Endothelial cell of umbilical vein (primary cell): ENCODE measurements at regions of chr1 and their contacts with region 1.

Region 1: GRCh38 chr1:220556641-220557040 is 28.7 kb downstream of the MARK1 start:
- DNase-seq: peak; percentile 7
- H3K4me3 ChIP-seq: no peak overlapping the region
- H3K27ac ChIP-seq: no peak overlapping the region
- H3K4me1 ChIP-seq: peaks cover 5% of the 10 kb centered on the region
- H3K27me3 ChIP-seq: no peaks in the 10 kb centered on the region
- CTCF ChIP-seq: no peak
- POLR2A ChIP-seq: no peak

Region 2: DNA sequence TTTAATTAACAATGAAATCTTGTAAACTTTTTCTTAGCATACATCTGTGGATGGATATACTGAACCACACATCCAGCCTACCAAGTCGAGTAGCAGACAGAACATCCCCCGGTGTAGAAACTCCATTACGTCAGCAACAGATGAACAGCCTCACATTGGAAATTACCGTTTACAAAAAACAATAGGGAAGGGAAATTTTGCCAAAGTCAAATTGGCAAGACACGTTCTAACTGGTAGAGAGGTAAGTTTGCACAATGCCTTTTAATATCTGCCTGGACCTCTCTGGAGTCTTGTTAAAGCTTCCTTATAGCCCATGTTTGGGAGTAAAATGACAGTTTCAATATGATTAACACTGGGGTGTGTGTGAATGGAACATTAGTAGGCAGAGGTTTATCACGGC is 22.7 kb after region 1 on chr1:
- CTCF ChIA-PET with region 1: no interaction called
- POLR2A ChIA-PET with region 1: no interaction called
- dilution Hi-C with region 1: no loop called
- intact Hi-C with region 1: loop called (anchors 2 kb)
- DNase-seq: no peak
- H3K4me3 ChIP-seq: no peak overlapping the region
- H3K27ac ChIP-seq: no peak overlapping the region
- H3K4me1 ChIP-seq: no peaks in the 10 kb centered on the region
- H3K27me3 ChIP-seq: no peaks in the 10 kb centered on the region
- CTCF ChIP-seq: no peak
- POLR2A ChIP-seq: no peak

Region 3: GRCh38 chr1:220594356-220594755 is 37.7 kb after region 1 on chr1:
- CTCF ChIA-PET with region 1: no interaction called
- POLR2A ChIA-PET with region 1: no interaction called
- dilution Hi-C with region 1: no loop called
- intact Hi-C with region 1: no loop called
- DNase-seq: peak; percentile 29
- H3K4me3 ChIP-seq: no peak overlapping the region
- H3K27ac ChIP-seq: no peak overlapping the region
- H3K4me1 ChIP-seq: no peaks in the 10 kb centered on the region
- H3K27me3 ChIP-seq: no peaks in the 10 kb centered on the region
- CTCF ChIP-seq: no peak
- POLR2A ChIP-seq: no peak